Stomach (tissue), 19 donors: ENCODE measurements at regions of chr9 and their contacts with region 1.

Region 1: GRCh38 chr9:36328798-36329411 is 70.7 kb upstream of the GNE start:
- DNase-seq: peak in 1 of 2 donors; percentile 89
- H3K4me3 ChIP-seq: no peak overlapping the region
- H3K27ac ChIP-seq: no peak overlapping the region
- H3K4me1 ChIP-seq: peaks cover 0 to 14% (median 6%) of the 10 kb centered on the region in 4 donors
- H3K27me3 ChIP-seq: no peaks in the 10 kb centered on the region
- CTCF ChIP-seq: peak in 5 of 7 experiments; percentile 56 to 89 (median 77)
- EP300 ChIP-seq: no peak
- POLR2A ChIP-seq: no peak

Region 2: GRCh38 chr9:36190388-36191287 is 138.3 kb before region 1 on chr9 and contains the start of gene CLTA:
- intact Hi-C with region 1: loop called (anchors 5 kb)
- DNase-seq: peak; percentile 96 to 99
- H3K4me3 ChIP-seq: peak within 1 kb of the TSS; percentile 73 to 98 (median 90)
- H3K27ac ChIP-seq: peak within 1 kb of the TSS; percentile 88 to 98 (median 94)
- H3K4me1 ChIP-seq: peaks cover 31 to 46% (median 38%) of the 10 kb centered on the region in 4 donors
- H3K27me3 ChIP-seq: no peaks in the 10 kb centered on the region
- CTCF ChIP-seq: peak in 4 of 7 experiments; percentile 29 to 56 (median 42)
- EP300 ChIP-seq: no peak
- POLR2A ChIP-seq: peak in 2 of 4 donors; percentile 39 to 49
- total RNA-seq, gene CLTA: 25.1 to 890 (median 117) TPM

Region 3: GRCh38 chr9:36250079-36250478 is 78.8 kb before region 1 on chr9:
- intact Hi-C with region 1: loop called (anchors 5 kb)
- DNase-seq: no peak
- H3K4me3 ChIP-seq: no peak overlapping the region
- H3K27ac ChIP-seq: no peak overlapping the region
- H3K4me1 ChIP-seq: peaks cover 9 to 47% (median 24%) of the 10 kb centered on the region in 4 donors
- H3K27me3 ChIP-seq: no peaks in the 10 kb centered on the region
- CTCF ChIP-seq: no peak
- EP300 ChIP-seq: no peak
- POLR2A ChIP-seq: no peak

Region 4: DNA sequence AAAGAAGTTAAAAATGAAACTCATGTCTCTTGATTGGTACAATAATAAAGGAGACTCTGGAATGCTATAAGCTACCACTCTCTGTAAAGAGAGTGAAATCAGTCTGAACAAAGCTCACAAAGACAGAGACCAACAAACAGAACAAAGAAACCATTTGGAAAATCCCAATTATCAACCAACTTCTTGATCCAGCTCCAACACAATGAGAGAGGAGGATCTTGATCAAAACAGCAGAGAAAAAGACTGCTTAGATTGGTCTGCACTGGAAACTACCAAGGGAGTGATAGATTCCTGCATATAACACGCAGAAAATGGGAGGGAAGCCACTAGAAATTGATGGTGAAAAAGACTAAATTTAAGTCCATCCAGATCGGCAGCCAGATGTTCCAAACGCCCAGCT is 94.3 kb after region 1 on chr9:
- intact Hi-C with region 1: no loop called
- DNase-seq: no peak
- H3K4me3 ChIP-seq: no peak overlapping the region
- H3K27ac ChIP-seq: no peak overlapping the region
- H3K4me1 ChIP-seq: peaks cover 9 to 19% (median 15%) of the 10 kb centered on the region in 4 donors
- H3K27me3 ChIP-seq: no peaks in the 10 kb centered on the region
- CTCF ChIP-seq: no peak
- EP300 ChIP-seq: no peak
- POLR2A ChIP-seq: no peak